ENCODE measurements at regions of chr7 and their contacts with region 1.

Region 1: GRCh38 chr7:12638851-12639467 is 48.5 kb upstream of the ARL4A start:
- DNase-seq: peak; percentile 54 to 75 (median 72)
- H3K4me3 ChIP-seq: peak overlapping the region in 2 of 7 experiments; percentile 71 to 72
- H3K27ac ChIP-seq: no peak overlapping the region
- H3K4me1 ChIP-seq: peaks cover 7 to 25% (median 9%) of the 10 kb centered on the region in 4 experiments
- H3K27me3 ChIP-seq: no peaks in the 10 kb centered on the region

Region 2: DNA sequence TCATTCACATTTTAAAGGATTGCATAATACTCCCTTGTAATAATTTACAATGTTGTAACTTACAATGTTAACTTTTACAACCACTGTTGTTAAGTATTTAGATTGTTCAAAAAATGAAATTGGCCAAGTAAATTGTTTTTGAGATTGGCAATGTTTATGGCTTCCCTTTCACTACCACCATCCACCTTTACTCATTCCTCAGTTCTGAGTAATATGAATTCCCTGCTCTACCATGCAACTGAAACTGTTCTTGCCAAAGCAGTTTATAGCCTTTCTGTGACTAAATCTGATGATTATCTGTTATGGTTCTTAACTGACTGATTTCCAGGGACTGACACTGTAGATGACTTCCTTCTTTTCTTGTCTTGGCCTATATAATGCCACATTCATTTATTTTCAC is 508.3 kb before region 1 on chr7:
- CTCF ChIA-PET with region 1: no interaction called
- POLR2A ChIA-PET with region 1: no interaction called
- DNase-seq: peak in 2 of 3 donors; percentile 9 to 31
- H3K4me3 ChIP-seq: no peak overlapping the region
- H3K27ac ChIP-seq: no peak overlapping the region
- H3K4me1 ChIP-seq: peaks cover 0 to 6% (median 0%) of the 10 kb centered on the region in 4 experiments
- H3K27me3 ChIP-seq: no peaks in the 10 kb centered on the region

Region 3: DNA sequence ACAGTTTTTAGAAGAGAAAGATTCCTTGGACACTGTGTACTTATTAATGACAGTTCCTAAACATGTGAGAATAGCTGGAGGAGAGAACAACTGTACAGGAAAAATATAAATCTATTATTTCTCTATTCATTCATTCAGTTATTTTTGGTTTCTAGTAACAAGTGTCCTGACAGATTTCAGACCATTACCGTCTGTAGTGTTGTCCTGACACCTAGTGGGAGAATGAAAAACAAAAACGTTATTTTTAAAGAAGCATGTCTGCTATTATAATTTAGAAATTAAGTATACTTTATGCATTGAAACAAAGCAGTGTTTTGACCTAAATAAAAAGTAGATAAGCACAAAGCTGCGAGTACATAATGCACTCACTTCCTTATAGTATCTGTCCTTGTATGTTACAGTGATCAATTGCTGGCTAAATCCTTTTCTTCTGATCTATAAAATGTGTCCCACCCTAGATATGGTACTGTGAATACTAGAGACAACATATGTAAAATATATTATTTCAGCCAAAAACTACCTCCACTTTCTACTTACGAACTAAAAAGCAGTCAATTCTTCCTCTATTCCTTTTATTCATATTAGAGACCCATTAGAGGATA is 624.1 kb after region 1 on chr7:
- CTCF ChIA-PET with region 1: interaction called, 10 read pairs
- POLR2A ChIA-PET with region 1: no interaction called
- DNase-seq: peak; percentile 45 to 76 (median 62)
- H3K4me3 ChIP-seq: no peak overlapping the region
- H3K27ac ChIP-seq: no peak overlapping the region
- H3K4me1 ChIP-seq: no peaks in the 10 kb centered on the region
- H3K27me3 ChIP-seq: no peaks in the 10 kb centered on the region